ENCODE measurements at regions of chr1 and their contacts with region 1.

Region 1: DNA sequence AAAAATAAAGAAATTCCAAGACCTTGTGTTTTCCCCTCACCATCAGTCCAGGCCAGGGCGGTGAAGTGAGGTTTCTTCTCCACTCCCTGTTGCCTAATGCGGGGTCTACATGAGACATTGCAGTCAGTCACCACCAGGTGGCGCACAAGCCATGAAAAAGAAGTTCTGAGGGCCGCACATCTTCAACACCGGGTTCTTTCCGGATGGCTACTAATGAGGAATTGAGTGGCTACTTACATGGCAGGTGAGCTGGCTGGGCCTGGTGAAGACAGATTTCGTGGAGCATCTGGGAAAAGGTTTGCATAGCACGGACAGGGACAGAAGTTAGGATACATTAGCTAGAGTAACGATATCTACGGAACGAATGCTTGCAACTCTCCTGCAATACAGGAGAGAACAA is 15.8 kb upstream of the S100A11 start:
- DNase-seq: peak; percentile 86
- ATAC-seq: peak in 1 of 2 donors; percentile 26

Region 2: GRCh38 chr1:152197228-152197951 is 144.8 kb after region 1 on chr1:
- intact Hi-C with region 1: no loop called
- DNase-seq: no peak
- ATAC-seq: no peak

Region 3: DNA sequence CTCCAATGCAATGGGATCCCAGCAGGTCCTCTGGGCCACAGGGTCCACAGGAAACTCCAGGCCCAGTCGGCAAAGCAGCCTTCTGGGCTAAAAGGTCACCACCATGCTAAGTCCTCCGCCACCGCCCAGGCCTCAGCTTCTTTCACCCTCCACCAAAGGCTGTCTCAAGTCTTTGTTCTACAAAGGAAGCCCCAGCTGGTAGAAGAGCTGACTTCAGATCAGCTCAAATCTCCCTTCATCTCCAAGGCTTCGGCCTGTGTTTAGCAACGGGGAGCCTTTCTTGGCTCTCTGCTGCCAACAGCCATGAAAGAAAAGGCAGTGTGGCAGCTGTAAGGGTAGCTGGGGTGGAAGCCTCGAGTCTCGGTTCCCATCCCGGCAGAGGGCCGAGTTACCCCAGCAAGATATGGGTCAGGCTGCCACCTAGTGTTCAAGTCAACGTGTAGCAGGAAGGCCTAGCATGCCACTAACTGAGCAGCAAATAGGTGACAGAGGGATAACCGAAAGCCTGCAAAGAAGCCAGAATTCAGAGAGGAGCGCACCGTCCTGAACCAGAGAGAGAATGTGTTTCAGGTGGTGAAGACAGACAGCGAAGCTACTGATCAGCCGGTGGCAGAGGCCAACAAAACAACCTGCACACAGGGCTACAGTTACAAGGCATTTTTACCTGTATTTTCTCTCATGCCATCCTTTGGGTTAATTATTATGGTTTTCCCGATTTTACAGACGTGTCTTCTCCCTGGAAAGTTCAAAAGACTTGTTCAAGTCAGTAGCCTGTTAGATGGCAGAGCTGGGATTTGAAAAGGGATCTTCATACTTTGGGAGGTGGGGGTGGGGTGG is 388.2 kb after region 1 on chr1:
- intact Hi-C with region 1: loop called in 1 of 2 experiments (anchors 5 kb)
- DNase-seq: peak; percentile 79
- ATAC-seq: peak; percentile 84 to 85